ENCODE measurements at regions of chr6 and their contacts with region 1.

Region 1: GRCh38 chr6:37051138-37052026 is 45.9 kb downstream of the FGD2 start:
- DNase-seq: peak; percentile 93
- ATAC-seq: peak; percentile 49
- H3K4me3 Mint-ChIP-seq: peak overlapping the region; percentile 83
- H3K27ac Mint-ChIP-seq: peak overlapping the region; percentile 94
- H3K4me1 Mint-ChIP-seq: peaks cover 68% of the 10 kb centered on the region
- H3K27me3 Mint-ChIP-seq: no peaks in the 10 kb centered on the region

Region 2: DNA sequence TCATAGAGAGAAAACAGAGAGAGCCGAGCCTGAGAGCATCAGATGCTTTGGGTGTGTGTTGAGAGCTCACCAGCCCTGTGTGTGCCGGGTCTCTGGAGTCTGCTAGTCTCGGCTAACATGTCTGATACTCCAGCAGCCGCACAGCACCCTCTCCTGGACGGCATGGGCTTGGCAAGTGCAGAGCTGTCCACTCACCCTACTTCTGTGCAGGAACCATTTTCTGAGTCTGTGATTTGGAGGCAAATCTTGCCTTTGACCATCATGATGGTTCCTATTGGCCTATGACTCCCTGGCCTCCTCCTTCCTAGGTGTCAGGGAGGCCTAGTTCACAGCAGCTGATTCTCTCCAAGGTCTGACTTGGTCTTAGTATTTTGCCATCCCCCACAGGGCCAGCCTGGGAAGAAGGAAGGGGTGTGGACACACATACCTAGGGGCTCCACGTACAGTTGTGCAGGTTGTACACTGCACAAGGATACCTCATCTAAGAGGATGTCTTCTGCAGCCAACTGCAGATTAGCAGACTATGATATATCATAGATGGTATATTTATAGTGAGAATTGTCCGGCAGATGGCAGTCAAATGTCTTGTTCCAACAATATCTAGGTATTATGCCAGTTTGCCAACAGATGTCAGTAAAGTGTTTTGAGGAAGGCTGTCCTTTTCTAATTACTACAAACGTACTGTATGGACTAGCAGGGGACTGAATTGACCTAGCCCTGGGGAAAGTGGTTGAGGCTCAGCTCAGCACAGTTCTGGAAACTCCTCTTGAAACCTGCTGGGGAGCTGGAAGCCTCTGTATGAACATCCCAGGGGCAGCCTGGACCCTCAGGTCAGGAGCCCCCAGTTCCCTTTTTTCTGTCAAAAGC is 33.0 kb before region 1 on chr6:
- POLR2A ChIA-PET with region 1: interaction called, 215 read pairs
- DNase-seq: peak; percentile 90
- ATAC-seq: peak; percentile 94
- H3K4me3 Mint-ChIP-seq: peak overlapping the region; percentile 31
- H3K27ac Mint-ChIP-seq: peak overlapping the region; percentile 70
- H3K4me1 Mint-ChIP-seq: peaks cover 51% of the 10 kb centered on the region
- H3K27me3 Mint-ChIP-seq: no peaks in the 10 kb centered on the region

Region 3: DNA sequence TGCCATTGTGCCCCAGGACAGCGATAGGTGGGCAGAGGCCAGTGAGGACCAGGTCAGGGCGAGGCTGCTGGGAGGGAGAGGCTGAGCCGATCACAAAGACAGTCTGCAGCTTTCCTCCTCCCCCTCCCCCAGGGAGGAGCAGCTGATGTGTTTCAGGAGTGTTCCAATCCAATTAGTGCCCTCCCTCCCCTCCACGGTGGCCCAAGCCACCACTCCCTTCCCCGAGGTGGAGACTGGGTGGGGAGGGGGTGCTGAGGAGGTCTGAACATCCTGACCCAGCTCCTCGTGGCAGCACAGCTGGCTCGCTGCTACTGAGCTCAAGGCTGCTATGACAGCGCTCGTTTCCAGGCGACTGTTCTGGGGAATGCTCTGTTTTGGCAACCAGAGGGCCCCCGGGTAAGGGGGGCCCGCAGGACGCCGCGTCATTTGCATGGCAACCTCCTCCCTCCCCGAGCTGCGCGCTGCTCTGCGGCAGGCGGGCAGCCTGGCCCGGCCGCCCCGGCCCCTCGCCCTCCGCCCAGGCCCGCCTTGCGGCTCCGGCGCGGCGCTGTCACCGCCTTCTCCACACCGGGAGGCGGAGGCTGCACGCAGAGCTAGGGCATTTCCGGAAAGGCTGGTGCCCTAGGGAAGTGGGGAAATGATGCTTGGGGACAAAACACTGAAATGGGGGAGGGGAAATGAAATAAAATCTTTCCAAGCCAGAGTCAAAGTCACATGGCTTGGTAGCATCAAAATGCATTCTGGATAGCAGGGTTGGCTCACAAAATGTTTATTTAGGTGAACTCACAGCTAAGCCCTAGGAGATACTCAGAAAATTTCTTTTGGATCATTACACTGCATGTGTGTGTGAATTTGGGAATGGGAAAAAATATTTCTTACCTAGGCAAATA is 51.1 kb after region 1 on chr6:
- POLR2A ChIA-PET with region 1: interaction called, 16 read pairs
- DNase-seq: peak; percentile 74
- ATAC-seq: peak; percentile 88
- H3K4me3 Mint-ChIP-seq: peak overlapping the region; percentile 60
- H3K27ac Mint-ChIP-seq: peak overlapping the region; percentile 78
- H3K4me1 Mint-ChIP-seq: peaks cover 35% of the 10 kb centered on the region
- H3K27me3 Mint-ChIP-seq: no peaks in the 10 kb centered on the region

Region 4: DNA sequence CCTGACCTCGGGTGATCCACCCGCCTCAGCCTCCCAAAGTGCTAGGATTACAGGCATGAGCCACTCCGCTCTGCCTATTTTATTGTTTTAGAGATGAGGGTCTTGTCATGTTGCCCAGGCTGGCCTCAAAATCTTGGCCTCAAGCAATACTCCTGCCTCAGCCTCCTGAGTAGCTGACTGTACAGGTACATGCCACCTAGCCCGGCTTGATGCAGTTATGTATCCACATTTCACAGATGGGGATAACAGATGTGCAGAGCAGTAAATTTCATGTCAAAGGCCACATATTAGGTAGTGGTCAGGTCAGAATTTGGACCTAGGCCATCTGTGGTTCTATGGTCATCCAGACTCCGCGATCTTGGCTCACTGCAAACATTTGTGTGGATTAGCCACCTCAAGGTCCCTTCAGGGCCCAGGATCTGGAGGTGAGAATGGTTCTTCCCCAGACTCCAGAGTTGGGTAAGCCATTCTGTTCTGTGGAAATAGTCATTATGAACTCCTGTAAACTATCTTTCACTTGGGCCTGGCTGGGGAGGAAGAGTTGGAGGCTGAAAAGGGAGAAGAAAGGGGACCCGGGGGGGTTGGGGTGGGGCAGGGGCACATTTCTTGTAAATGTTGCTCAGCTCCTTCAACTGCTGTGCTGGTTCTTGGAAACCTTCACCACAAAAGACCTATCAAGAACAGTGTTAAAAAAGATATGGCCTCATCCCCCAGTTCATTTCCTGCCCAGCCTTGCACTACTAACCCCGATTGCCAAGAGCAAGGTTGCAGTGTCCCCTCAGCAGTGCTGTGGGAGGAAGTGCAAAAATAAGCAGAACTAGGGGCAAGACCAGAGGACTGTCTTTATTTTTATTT is 131.6 kb after region 1 on chr6:
- POLR2A ChIA-PET with region 1: interaction called, 580 read pairs
- DNase-seq: peak; percentile 60
- ATAC-seq: peak; percentile 96
- H3K4me3 Mint-ChIP-seq: peak overlapping the region; percentile 68
- H3K27ac Mint-ChIP-seq: peak overlapping the region; percentile 95
- H3K4me1 Mint-ChIP-seq: peaks cover 65% of the 10 kb centered on the region
- H3K27me3 Mint-ChIP-seq: no peaks in the 10 kb centered on the region

Region 5: DNA sequence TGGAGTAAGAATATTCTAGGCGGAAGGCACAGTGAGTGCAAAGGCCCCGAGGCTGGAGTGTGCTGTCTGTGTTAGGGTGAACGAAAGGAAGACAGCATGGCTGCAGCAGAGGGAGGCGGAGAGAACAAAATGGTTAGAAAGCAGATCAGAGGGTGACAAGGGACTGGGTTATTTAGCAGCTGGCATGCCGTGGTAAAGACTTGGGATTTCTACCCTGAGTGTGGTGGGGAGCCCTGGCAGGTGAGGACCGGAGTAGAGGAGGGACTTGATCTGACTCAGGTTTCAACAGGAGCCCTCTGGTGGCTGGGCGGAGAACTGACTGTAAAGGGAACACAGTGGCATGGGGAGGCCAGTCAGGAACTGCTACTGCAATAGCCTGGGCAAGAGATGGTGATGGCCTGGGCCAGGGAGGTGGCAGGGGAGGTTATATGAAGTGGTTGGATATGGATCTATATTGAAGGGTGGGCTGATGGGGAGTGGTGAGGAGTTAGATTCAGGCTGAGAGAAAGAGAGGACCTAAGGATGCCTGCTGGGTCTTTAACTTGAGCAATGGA is 156.6 kb after region 1 on chr6:
- POLR2A ChIA-PET with region 1: interaction called, 150 read pairs
- DNase-seq: peak; percentile 88
- ATAC-seq: peak; percentile 66
- H3K4me3 Mint-ChIP-seq: peak overlapping the region; percentile 76
- H3K27ac Mint-ChIP-seq: peak overlapping the region; percentile 92
- H3K4me1 Mint-ChIP-seq: peaks cover 63% of the 10 kb centered on the region
- H3K27me3 Mint-ChIP-seq: no peaks in the 10 kb centered on the region

Measured in activated naive CD8-positive, alpha-beta T cell treated with anti-CD3 and anti-CD28 coated beads, Interleukin-2, amount 10 ng/mL, durations not matched to agents 7 days and 5 days (primary cell).